Caco-2 (cell line): ENCODE measurements at regions of chr19 and their contacts with region 1.

Region 1: DNA sequence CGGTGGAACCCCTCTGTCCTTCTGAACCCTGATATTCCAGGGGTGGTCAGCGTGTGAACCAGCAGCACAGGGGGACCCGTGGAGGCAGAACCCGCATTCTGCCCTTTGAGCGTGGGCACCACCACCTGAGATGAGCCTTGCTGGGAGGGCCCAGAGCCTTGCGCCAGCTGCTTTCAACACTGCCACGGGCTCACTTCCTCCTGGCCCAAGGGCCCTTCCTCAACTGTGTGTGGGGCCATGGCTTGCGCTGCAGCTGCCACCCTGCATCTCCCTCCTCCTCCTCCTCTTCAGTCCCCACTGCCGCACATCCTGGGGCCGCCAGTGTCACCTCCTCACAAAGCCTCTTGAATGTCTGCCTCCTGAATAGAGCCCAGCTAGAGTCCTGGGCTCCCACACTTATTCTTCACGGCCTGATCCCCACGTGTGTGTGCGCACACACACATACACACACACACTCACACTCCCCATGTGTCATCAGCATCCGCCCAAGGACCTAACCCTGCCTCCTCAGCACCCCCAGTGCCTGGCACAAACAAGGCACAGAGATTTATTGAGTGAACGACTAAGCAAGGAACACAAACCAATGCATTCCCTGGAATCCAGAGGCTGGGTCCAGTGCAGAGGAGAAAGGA is 26.9 kb upstream of the TMEM160 start:
- DNase-seq: no peak
- H3K4me3 ChIP-seq: no peak overlapping the region
- H3K4me3 Mint-ChIP-seq: no peak overlapping the region
- H3K27ac Mint-ChIP-seq: no peak overlapping the region
- H3K4me1 ChIP-seq: peaks cover 10% of the 10 kb centered on the region
- H3K4me1 Mint-ChIP-seq: peaks cover 3% of the 10 kb centered on the region
- H3K27me3 ChIP-seq: no peaks in the 10 kb centered on the region
- H3K27me3 Mint-ChIP-seq: no peaks in the 10 kb centered on the region
- CTCF ChIP-seq: no peak

Region 2: GRCh38 chr19:47094557-47095475 is 19.5 kb after region 1 on chr19:
- CTCF ChIA-PET with region 1: interaction called, 20 read pairs
- POLR2A ChIA-PET with region 1: interaction called, 4 read pairs
- intact Hi-C with region 1: loop called (anchors 1 kb)
- DNase-seq: peak; percentile 75 to 88
- H3K4me3 ChIP-seq: no peak overlapping the region
- H3K4me3 Mint-ChIP-seq: peak overlapping the region; percentile 41
- H3K27ac Mint-ChIP-seq: peak overlapping the region; percentile 100
- H3K4me1 ChIP-seq: peaks cover 64% of the 10 kb centered on the region
- H3K4me1 Mint-ChIP-seq: peaks cover 50% of the 10 kb centered on the region
- H3K27me3 ChIP-seq: no peaks in the 10 kb centered on the region
- H3K27me3 Mint-ChIP-seq: no peaks in the 10 kb centered on the region
- CTCF ChIP-seq: no peak